ENCODE measurements at regions of chr1 and their contacts with region 1.

Region 1: GRCh38 chr1:196660852-196661251 is 9.0 kb downstream of the CFH start:
- DNase-seq: peak; percentile 12 to 46
- H3K4me3 ChIP-seq: no peak overlapping the region
- H3K4me1 ChIP-seq: no peaks in the 10 kb centered on the region
- H3K27me3 ChIP-seq: no peaks in the 10 kb centered on the region

Region 2: GRCh38 chr1:196160066-196160795 is 500.6 kb before region 1 on chr1:
- in situ Hi-C with region 1: loop called (anchors 25 kb)
- DNase-seq: no peak
- H3K4me3 ChIP-seq: no peak overlapping the region
- H3K4me1 ChIP-seq: no peaks in the 10 kb centered on the region
- H3K27me3 ChIP-seq: no peaks in the 10 kb centered on the region

Region 3: GRCh38 chr1:196317535-196318522 is 343.0 kb before region 1 on chr1:
- in situ Hi-C with region 1: loop called (anchors 25 kb)
- DNase-seq: peak; percentile 67
- H3K4me3 ChIP-seq: no peak overlapping the region
- H3K4me1 ChIP-seq: peaks cover 3% of the 10 kb centered on the region
- H3K27me3 ChIP-seq: no peaks in the 10 kb centered on the region

Region 4: GRCh38 chr1:197130677-197131304 is 469.9 kb after region 1 on chr1:
- in situ Hi-C with region 1: no loop called
- DNase-seq: no peak
- H3K4me3 ChIP-seq: no peak overlapping the region
- H3K4me1 ChIP-seq: no peaks in the 10 kb centered on the region
- H3K27me3 ChIP-seq: no peaks in the 10 kb centered on the region

Measured in HAP-1 (cell line).